HepG2 (cell line): ENCODE measurements at regions of chr15 and their contacts with region 1.

Region 1: DNA sequence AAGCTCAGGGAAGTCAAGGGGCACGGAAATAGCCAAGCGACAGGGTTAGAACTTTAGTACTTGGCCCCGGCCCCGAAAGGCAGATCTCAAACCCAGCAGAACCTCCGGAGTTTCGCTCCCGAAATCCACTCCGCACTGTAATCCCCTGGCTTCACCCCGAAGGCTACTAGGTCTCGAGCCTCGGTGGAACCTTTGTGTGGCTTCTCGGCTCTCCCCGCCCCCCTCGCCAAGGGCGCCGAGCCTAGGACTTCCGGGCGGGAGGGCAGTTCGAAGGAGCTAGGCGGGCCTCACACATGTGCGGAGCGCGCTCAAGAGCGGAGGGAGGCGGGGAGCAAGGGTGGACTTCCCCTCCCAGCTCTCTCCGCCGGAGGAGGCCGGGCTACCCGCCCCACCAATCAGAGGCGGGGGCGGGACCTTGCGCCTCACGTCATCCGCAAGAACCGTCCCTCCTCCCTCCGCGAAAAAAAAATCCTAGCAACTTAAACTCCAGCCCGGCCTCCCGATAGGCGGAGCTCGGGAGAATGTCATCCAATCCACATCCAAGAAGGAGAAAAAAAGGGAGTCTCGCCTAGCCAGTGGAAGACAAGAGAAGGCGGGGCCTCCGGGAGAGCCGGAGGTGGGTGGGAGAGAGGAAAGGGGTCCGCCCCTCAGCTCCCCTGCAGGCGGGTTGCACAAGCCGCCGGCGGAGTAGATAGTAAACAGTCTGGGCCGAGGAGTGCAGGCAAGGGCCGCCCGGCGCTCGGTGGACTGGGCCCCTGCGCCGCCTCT is 2.4 kb upstream of the SIN3A start:
- DNase-seq: peak; percentile 100
- ATAC-seq: peak; percentile 38
- H3K4me3 ChIP-seq: peak overlapping the region; percentile 91 to 93 (median 93)
- H3K27ac ChIP-seq: peak overlapping the region; percentile 94
- H3K4me1 ChIP-seq: peaks cover 37% of the 10 kb centered on the region
- H3K27me3 ChIP-seq: no peaks in the 10 kb centered on the region; a peak in 1 of 5 replicates
- CTCF ChIP-seq: no peak
- EP300 ChIP-seq: no peak
- POLR2A ChIP-seq: peak in 1 of 2 experiments; percentile 62; a peak in 2 of 4 replicates
- RAD21 ChIP-seq: no peak

Region 2: DNA sequence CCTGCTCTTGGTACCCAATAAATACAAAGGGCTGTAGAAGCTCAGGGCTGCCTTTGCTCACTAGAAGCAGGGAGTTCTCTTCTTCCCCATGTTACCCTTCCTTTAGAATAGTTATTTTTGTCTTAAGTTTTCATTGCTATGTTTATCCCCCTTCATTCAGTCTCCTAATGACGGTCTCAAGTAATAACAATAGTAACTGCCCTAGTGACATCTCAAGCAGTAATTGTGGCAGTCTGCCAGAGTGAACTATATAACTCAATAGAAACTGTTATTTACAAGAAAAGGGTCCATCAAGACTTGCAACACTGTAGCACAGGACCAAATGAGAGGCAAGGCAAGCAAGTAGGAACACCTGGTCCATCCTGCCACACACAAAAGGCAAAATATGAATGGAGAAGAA is 30.1 kb after region 1 on chr15:
- CTCF ChIA-PET with region 1: no interaction called
- POLR2A ChIA-PET with region 1: interaction called, 3 read pairs
- in situ Hi-C with region 1: no loop called
- intact Hi-C with region 1: loop called (anchors 1 kb)
- DNase-seq: no peak
- ATAC-seq: no peak
- H3K4me3 ChIP-seq: no peak overlapping the region
- H3K27ac ChIP-seq: no peak overlapping the region
- H3K4me1 ChIP-seq: no peaks in the 10 kb centered on the region
- H3K27me3 ChIP-seq: no peaks in the 10 kb centered on the region
- CTCF ChIP-seq: no peak
- EP300 ChIP-seq: no peak
- POLR2A ChIP-seq: no peak
- RAD21 ChIP-seq: no peak

Region 3: DNA sequence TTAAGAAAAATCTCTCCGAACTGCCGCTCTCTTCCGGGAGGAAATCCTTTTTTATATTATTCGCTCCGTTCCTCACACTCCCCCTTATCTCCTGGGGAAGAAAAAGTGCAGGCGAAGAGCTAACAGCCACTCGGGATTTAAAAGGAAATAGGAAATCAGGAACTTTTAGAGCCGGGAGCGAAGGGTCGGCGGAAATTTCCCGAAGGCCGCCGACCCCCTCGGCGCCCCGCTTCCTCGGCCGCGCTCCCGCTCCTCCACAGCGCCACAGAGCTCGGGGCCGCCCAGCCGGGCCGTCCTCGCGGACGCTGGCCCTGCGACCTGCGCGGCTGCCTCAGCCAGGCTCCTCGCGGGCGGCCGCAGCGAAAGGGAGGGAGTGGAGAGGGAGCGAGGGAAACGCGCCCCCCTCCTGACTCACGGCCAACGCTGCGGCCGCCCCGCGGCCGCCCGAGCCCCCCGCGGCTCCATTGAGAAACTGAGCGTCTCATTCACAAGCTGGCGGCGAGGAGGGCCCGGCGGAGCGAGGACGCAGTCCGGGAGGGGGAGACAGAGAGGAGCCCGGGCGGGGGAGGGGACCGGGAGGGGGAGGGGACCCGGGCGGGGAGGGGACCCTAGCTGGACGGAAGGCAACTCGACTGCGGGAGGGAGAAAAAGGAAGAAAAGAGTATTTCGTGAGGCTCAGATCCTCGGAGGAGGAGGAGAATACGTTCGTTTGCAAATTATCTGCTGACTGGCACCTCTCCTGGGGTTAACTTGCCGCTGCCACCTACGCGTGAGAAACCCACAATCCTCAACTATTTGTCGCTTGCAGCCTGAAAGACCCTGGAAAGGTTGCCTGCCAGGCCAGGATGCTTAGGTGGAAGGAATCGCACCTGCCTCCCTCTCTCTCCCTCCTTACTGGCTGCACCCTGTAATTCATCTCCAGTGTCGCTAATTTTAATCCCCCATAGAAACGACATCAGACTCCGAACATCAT is 125.3 kb after region 1 on chr15 and contains the start of gene PTPN9:
- CTCF ChIA-PET with region 1: no interaction called
- POLR2A ChIA-PET with region 1: interaction called, 12 read pairs
- in situ Hi-C with region 1: no loop called
- intact Hi-C with region 1: no loop called
- DNase-seq: peak; percentile 66
- ATAC-seq: peak; percentile 88
- H3K4me3 ChIP-seq: peak within 1 kb of the TSS; percentile 74 to 100 (median 87)
- H3K27ac ChIP-seq: peak within 1 kb of the TSS; percentile 93
- H3K4me1 ChIP-seq: peaks cover 37% of the 10 kb centered on the region
- H3K27me3 ChIP-seq: no peaks in the 10 kb centered on the region; a peak in 2 of 5 replicates
- CTCF ChIP-seq: peak; percentile 57
- EP300 ChIP-seq: no peak
- POLR2A ChIP-seq: peak in 1 of 2 experiments; percentile 28; a peak in 2 of 4 replicates
- RAD21 ChIP-seq: no peak
- total RNA-seq, gene PTPN9: 16.5 and 16.6 TPM in 2 replicates

Region 4: GRCh38 chr15:75625542-75626347 is 171.9 kb after region 1 on chr15 and contains the start of gene SNUPN:
- CTCF ChIA-PET with region 1: no interaction called
- POLR2A ChIA-PET with region 1: interaction called, 10 read pairs
- in situ Hi-C with region 1: no loop called
- intact Hi-C with region 1: loop called (anchors 5 kb)
- DNase-seq: peak; percentile 91
- ATAC-seq: peak; percentile 91
- H3K4me3 ChIP-seq: peak within 1 kb of the TSS; percentile 89 to 100 (median 100)
- H3K27ac ChIP-seq: peak within 1 kb of the TSS; percentile 99
- H3K4me1 ChIP-seq: peaks cover 20% of the 10 kb centered on the region
- H3K27me3 ChIP-seq: no peaks in the 10 kb centered on the region; a peak in 1 of 5 replicates
- CTCF ChIP-seq: no peak
- EP300 ChIP-seq: peak in 1 of 2 experiments; percentile 52; a peak in 1 of 4 replicates
- POLR2A ChIP-seq: peak; percentile 45 to 76; a peak in 3 of 4 replicates
- RAD21 ChIP-seq: peak; percentile 9; the same call in 1 of the 2 replicates
- total RNA-seq, gene SNUPN: 16.4 and 18.3 TPM in 2 replicates